ENCODE measurements at regions of chr12 and their contacts with region 1.

Region 1: GRCh38 chr12:103858953-103859601 is 18.0 kb upstream of the NT5DC3 start:
- DNase-seq: peak; percentile 81
- H3K4me3 ChIP-seq: no peak overlapping the region
- H3K27ac ChIP-seq: peak overlapping the region; percentile 84 to 92 (median 88)
- H3K4me1 ChIP-seq: peaks cover 14 to 49% (median 21%) of the 10 kb centered on the region in 4 donors
- H3K27me3 ChIP-seq: no peaks in the 10 kb centered on the region
- CTCF ChIP-seq: peak in 1 of 5 experiments; percentile 15
- EP300 ChIP-seq: peak; percentile 98
- POLR2A ChIP-seq: peak; percentile 66

Region 2: GRCh38 chr12:103632554-103633216 is 226.4 kb before region 1 on chr12:
- in situ Hi-C with region 1: loop called in 1 of 4 experiments (anchors 25 kb)
- intact Hi-C with region 1: no loop called
- DNase-seq: peak; percentile 72
- H3K4me3 ChIP-seq: no peak overlapping the region
- H3K27ac ChIP-seq: no peak overlapping the region
- H3K4me1 ChIP-seq: no peaks in the 10 kb centered on the region
- H3K27me3 ChIP-seq: no peaks in the 10 kb centered on the region
- CTCF ChIP-seq: peak; percentile 50 to 66 (median 56)
- EP300 ChIP-seq: no peak
- POLR2A ChIP-seq: no peak

Region 3: DNA sequence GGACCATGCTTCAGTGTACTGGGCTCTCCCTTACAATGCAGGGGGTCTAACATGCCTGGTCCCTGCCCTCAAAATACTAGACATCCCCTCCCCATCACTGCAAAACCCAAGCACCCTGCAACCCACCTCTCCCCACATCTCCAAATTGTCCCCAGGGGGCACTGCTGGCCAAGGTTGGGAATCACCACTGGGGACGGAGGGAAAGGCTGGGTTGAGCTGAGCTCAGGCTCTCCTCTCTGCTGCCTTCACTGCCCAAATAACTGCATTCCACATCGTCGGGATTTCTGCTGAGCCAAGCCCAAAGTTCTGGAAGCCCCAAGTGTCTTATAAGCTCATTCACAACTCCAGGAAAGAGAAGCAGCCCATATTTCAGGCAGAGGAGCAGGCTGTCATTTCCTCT is 87.6 kb before region 1 on chr12:
- in situ Hi-C with region 1: no loop called
- intact Hi-C with region 1: loop called (anchors 10 kb)
- DNase-seq: peak; percentile 17
- H3K4me3 ChIP-seq: no peak overlapping the region
- H3K27ac ChIP-seq: no peak overlapping the region
- H3K4me1 ChIP-seq: peaks cover 0 to 8% (median 6%) of the 10 kb centered on the region in 4 donors
- H3K27me3 ChIP-seq: no peaks in the 10 kb centered on the region
- CTCF ChIP-seq: peak in 4 of 5 experiments; percentile 16 to 34 (median 32)
- EP300 ChIP-seq: no peak
- POLR2A ChIP-seq: no peak

Region 4: GRCh38 chr12:103799870-103800771 is 59.0 kb before region 1 on chr12:
- in situ Hi-C with region 1: no loop called
- intact Hi-C with region 1: no loop called
- DNase-seq: peak; percentile 33
- H3K4me3 ChIP-seq: no peak overlapping the region
- H3K27ac ChIP-seq: peak overlapping the region; percentile 57 to 75 (median 68)
- H3K4me1 ChIP-seq: peaks cover 12 to 36% (median 19%) of the 10 kb centered on the region in 4 donors
- H3K27me3 ChIP-seq: no peaks in the 10 kb centered on the region
- CTCF ChIP-seq: no peak
- EP300 ChIP-seq: peak; percentile 21
- POLR2A ChIP-seq: no peak

Region 5: DNA sequence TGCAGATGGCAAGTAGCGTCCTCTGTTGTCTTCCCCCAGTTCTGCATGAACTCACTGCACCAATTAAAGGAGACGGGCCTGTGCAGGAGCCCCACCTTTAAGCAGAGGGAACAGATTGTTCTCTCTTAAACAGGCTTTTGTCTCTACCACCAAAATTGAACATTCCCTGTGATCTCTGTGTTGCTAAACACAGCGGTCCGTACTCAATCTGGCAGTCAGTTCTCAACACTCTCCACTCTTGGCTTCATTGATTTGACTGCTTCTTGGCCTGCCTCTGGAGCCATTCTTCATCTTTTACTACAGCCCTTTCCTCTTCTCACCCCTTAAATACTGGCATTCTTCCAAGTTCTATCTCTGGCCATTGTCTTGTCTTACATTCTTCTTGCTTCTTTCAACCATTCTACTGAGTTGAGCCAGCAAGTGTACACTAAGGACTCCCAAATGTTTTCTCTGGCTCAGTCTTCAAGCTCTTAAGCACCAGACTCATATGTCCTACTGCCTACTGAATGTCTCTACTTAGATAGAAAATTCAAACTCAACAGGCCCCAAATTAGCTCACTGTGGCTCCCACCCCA is 10.1 kb before region 1 on chr12:
- in situ Hi-C with region 1: no loop called
- intact Hi-C with region 1: loop called (anchors 1 kb)
- DNase-seq: no peak
- H3K4me3 ChIP-seq: no peak overlapping the region
- H3K27ac ChIP-seq: peak overlapping the region; percentile 61 to 92 (median 86)
- H3K4me1 ChIP-seq: peaks cover 12 to 53% (median 28%) of the 10 kb centered on the region in 4 donors
- H3K27me3 ChIP-seq: no peaks in the 10 kb centered on the region
- CTCF ChIP-seq: peak in 1 of 5 experiments; percentile 15
- EP300 ChIP-seq: peak; percentile 94
- POLR2A ChIP-seq: no peak

Region 6: GRCh38 chr12:103924761-103925641 is 65.9 kb after region 1 on chr12:
- in situ Hi-C with region 1: no loop called
- intact Hi-C with region 1: no loop called
- DNase-seq: no peak
- H3K4me3 ChIP-seq: no peak overlapping the region
- H3K27ac ChIP-seq: no peak overlapping the region
- H3K4me1 ChIP-seq: peaks cover 0 to 12% (median 4%) of the 10 kb centered on the region in 4 donors
- H3K27me3 ChIP-seq: no peaks in the 10 kb centered on the region
- CTCF ChIP-seq: no peak
- EP300 ChIP-seq: no peak
- POLR2A ChIP-seq: no peak

Measured in transverse colon (tissue), 4 donors.